Sciatic nerve (tissue), 2 donors: ENCODE measurements at regions of chr9 and their contacts with region 1.

Region 1: GRCh38 chr9:126398403-126399058 is 71.9 kb downstream of the MVB12B start:
- DNase-seq: peak; percentile 91
- ATAC-seq: peak; percentile 92

Region 2: GRCh38 chr9:125758986-125759763 is 639.4 kb before region 1 on chr9:
- intact Hi-C with region 1: loop called (anchors 10 kb)
- DNase-seq: no peak
- ATAC-seq: peak; percentile 77

Region 3: GRCh38 chr9:126307322-126308061 is 91.0 kb before region 1 on chr9:
- intact Hi-C with region 1: no loop called
- DNase-seq: no peak
- ATAC-seq: peak; percentile 68

Region 4: DNA sequence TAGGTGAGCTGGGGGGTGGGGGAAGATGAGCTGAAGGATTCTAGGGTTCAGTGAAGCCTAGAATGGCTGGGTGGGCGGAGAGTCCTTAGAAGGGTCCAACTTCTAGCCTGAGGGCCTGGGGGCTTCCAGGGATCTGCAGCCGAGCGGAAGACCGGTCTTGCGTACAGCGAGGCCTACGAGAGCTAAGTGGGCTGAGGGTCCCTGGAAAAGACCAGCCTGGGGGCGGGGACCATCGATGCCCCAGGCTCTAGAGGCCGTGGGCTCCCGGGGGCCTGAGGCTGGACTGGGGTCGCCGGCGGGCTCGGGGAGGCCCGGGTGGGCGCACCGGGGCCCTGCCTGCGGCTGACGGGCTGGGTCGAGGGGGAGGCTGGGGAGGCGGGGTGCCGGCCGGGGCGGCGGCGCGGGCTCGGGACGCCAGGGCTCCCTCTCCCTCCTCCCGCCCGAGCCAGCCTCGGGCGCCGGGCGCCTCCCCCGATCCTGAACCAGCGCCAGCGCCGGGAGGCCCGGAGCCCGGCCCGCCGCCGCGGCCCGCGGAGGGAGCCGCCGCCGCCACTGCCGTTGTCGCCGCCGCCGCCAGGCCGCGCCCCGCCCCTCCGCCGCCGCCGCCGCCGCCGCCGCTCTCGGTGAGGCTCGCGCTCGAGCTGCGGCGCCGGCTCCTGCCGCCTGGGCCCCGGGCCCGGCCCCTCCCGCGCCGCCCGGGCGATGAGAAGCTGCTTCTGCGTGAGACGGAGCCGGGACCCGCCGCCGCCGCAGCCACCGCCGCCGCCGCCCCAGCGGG is 72.1 kb before region 1 on chr9 and contains the start of gene MVB12B:
- intact Hi-C with region 1: loop called (anchors 10 kb)
- DNase-seq: no peak
- ATAC-seq: peak; percentile 33
- total RNA-seq, gene MVB12B: 65.7 TPM